ENCODE measurements at regions of chr13 and their contacts with region 1.

Region 1: GRCh38 chr13:45040622-45041021 is 51.3 kb downstream of the GPALPP1 start:
- DNase-seq: peak; percentile 24
- H3K4me3 Mint-ChIP-seq: no peak overlapping the region
- H3K27ac Mint-ChIP-seq: no peak overlapping the region
- H3K4me1 Mint-ChIP-seq: no peaks in the 10 kb centered on the region
- H3K27me3 Mint-ChIP-seq: peaks cover 3% of the 10 kb centered on the region

Region 2: DNA sequence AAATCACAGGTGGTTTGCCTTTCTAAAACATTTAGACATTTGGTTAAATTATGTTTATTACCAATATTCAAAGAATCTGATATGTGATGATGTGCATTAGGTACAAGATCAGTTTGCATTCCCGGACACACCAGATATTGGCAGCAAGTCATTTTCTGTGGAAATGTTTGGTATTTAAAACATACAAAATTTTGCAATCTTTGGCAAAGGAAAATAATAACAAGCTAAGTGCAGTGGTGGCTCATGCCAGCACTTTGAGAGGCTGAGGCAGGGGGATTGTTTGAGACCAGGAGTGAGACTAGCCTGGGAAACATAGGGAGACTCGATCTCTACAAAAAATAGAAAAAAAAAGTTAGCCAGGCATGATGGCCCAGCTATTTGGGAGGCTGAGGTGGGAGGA is 435.3 kb before region 1 on chr13:
- CTCF ChIA-PET with region 1: no interaction called
- POLR2A ChIA-PET with region 1: no interaction called
- intact Hi-C with region 1: no loop called
- DNase-seq: no peak
- H3K4me3 Mint-ChIP-seq: no peak overlapping the region
- H3K27ac Mint-ChIP-seq: no peak overlapping the region
- H3K4me1 Mint-ChIP-seq: no peaks in the 10 kb centered on the region
- H3K27me3 Mint-ChIP-seq: no peaks in the 10 kb centered on the region

Region 3: DNA sequence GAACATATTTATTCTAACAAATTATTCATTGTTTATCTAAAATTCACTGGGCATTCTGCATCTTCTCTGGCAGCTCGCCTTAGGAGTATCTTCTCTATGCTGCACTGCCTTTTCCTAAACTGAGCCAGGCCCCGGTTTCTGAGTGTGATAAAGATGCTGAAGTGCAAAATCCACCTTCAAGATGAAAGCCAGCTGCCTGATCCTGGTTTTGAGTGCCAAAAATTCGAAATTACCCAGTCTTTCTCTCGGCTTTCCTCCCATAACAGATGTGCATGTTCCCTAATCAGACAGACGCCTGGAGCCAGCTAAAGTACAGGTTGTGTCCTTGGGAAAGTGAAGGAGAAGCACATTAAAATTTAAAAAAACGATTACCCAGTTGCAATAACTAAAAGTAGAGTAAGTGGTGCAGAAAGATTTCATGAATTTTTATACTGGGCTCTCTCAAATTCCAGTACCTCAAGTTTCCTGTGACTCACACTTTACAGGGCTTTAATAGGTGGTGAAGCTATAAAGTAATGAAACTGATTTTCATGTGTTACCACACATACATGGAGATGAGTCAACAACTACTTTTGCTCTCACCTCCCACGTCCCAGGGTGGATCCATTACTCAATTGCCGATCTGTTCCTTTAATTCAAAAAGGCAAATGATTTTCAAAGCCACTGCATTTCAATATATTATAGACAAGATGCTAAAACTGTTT is 14.7 kb after region 1 on chr13:
- CTCF ChIA-PET with region 1: no interaction called
- POLR2A ChIA-PET with region 1: no interaction called
- intact Hi-C with region 1: no loop called
- DNase-seq: peak; percentile 82
- H3K4me3 Mint-ChIP-seq: no peak overlapping the region
- H3K27ac Mint-ChIP-seq: no peak overlapping the region
- H3K4me1 Mint-ChIP-seq: peaks cover 21% of the 10 kb centered on the region
- H3K27me3 Mint-ChIP-seq: peaks cover 44% of the 10 kb centered on the region

Region 4: DNA sequence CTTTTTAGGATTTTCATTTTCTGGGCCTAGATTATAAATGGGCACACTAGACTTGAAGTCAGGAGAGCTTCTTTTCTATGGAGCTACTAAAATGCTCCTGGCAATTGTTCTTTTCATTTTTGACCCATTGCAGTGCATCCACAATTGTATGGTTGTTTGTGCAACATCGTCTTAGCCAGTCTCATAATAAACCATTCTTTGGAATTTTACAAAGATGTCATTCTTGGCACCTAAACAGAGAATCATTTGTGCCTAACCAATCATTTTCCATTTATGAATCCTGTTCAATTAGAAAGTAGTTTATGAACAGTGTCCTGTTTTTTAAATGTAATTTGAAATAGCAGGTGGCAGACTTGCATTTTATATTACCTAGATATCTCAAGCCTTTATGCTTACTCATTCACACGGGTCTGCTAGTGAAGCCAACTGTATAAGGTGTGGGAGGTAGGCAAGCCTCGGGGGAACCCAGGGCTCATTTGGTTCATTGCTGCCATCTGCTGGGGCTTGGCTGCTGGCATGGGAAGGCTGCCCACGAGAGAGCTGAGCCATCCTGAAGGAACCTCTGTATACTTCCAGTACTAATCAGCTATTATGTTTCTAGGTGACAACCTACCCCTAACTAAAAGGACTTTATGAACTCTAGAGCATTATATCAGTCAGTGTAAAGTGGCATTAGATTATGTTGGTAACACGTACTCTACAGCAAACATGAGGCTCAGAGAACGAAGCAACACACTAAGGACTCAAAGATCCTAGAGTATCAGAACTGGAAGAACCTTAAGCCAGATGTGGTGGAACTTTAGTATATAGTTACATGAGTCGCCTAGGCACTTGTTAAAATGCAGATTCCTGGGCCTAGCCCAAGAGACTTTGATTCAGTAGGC is 240.4 kb after region 1 on chr13:
- CTCF ChIA-PET with region 1: interaction called, 106 read pairs
- POLR2A ChIA-PET with region 1: no interaction called
- intact Hi-C with region 1: no loop called
- DNase-seq: peak; percentile 75
- H3K4me3 Mint-ChIP-seq: no peak overlapping the region
- H3K27ac Mint-ChIP-seq: no peak overlapping the region
- H3K4me1 Mint-ChIP-seq: no peaks in the 10 kb centered on the region
- H3K27me3 Mint-ChIP-seq: no peaks in the 10 kb centered on the region

Measured in activated CD4-positive, alpha-beta memory T cell treated with anti-CD3 and anti-CD28 coated beads for 36 hours (primary cell).